MCF 10A (cell line): ENCODE measurements at regions of chr2 and their contacts with region 1.

Region 1: DNA sequence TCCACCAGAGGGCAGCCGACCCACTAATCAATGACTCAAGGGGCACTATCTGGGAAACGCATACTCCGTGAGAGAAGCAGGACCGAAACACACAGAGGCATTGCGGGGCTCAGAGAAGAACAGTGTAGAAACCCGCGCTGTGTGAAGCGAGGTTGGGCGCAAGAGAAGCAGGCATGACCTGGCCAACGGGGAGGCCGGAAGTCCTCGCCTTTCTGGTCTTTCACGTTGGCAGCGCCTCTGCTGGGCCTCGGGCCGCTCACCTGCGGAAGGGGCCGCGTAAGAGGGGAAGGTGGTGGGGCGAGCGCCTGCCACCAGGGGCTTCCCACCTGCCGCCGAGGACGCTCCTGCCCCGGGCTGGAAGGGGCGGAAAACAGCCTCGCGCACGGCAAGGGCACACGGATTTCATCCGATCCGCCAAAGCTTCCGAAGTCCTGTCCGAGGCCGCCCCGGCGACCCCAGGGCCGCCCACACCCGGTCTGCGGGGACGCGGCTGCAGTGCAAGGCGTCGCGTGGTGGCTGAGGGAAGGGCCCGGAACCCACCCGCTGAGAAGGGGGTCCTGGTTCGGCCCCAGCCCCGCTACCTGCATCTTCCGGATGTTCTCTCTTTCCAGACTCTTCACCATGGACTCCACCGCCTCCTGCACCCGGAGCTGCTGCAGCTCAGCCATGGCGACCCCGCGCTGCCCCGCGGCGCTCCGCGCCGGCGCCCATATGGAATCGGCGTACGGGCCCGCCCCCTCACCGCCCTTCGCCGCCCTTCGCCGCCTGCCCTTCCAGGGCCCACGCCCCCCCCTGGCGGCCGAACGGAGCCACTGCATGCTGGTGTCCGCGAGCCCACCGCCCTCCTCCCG is at the start of gene FAM136A:
- DNase-seq: peak; percentile 75
- H3K4me3 Mint-ChIP-seq: peak within 1 kb of the TSS; percentile 91
- H3K27ac Mint-ChIP-seq: peak within 1 kb of the TSS; percentile 85
- H3K4me1 Mint-ChIP-seq: no peaks in the 10 kb centered on the region
- H3K27me3 Mint-ChIP-seq: no peaks in the 10 kb centered on the region
- CTCF ChIP-seq: peak; percentile 97
- total RNA-seq, gene FAM136A: 38.8 and 43.8 TPM in 2 replicates

Region 2: DNA sequence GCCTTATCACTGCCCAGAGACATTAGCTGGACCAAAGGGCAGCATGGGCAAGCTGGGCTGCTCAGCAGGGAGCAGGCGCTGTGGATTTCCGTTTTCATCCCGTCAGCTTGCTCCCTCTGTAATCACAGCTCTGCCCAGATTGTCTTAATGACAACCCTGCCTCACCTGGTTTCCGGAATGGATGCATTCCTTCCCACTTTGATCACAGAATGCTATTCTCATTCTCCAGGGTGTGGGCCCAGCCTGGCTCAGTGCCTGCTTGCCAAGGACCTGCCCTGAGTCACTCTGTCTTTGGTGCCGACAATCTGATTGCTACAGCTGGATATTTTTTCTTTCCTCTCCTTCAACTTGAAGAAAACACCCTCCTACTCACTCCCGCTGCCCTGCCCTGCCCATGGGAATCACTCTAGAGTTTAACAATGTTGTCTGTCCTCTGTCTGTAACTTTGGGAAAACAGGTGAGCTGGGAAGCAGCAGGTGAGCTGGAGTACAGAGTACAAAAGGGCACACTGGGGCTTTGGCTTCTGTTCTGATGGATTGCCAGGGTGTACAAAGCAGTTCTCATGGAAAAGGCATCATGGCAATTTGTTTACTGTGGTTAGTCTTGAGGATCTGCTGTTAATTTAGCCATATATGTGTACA is 27.5 kb after region 1 on chr2:
- CTCF ChIA-PET with region 1: interaction called, 51 read pairs
- POLR2A ChIA-PET with region 1: interaction called, 13 read pairs
- intact Hi-C with region 1: no loop called
- DNase-seq: peak; percentile 92
- H3K4me3 Mint-ChIP-seq: peak overlapping the region; percentile 14
- H3K27ac Mint-ChIP-seq: peak overlapping the region; percentile 89
- H3K4me1 Mint-ChIP-seq: peaks cover 13% of the 10 kb centered on the region
- H3K27me3 Mint-ChIP-seq: no peaks in the 10 kb centered on the region
- CTCF ChIP-seq: no peak

Region 3: DNA sequence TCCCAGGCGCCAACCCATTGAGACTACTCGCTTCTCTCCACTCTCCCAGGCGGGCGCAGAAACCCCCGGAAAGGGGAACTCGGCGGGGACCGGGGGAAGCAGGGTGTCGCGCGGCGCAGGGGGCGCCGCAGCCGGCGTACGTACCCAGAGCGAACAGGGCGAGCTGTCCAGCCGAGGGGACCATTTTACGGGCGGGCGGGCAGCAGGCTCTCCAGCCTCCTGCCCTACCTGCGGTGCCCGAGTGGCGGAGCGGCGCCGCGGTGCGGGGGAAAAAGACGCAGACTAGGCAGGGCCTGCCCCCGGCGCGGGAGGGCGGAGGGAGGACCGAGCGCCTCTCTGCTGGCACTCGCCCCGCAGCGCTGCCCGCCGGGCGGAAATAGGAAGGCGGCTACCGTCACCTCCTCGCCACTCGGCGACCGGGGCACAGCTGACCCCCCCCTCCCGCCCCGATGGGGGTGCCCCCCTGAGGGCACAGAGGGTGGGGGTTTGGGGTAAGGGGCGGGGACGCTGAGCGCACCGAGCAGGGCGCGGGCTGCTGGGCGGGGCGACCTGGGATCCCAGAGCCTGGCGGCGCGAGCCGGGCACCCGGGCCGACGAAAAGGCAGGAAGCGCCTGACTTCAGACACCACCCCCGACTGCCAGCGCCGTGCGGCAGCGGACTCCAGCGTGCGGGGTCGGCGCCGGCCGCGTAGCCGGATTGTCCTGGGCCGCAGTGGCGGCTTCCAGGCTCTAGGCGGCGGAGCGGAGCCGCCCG is 252.2 kb after region 1 on chr2 and contains the start of gene TGFA:
- CTCF ChIA-PET with region 1: interaction called, 19 read pairs
- POLR2A ChIA-PET with region 1: interaction called, 6 read pairs
- intact Hi-C with region 1: loop called (anchors 1 kb)
- DNase-seq: peak; percentile 89
- H3K4me3 Mint-ChIP-seq: peak within 1 kb of the TSS; percentile 93
- H3K27ac Mint-ChIP-seq: peak within 1 kb of the TSS; percentile 83
- H3K4me1 Mint-ChIP-seq: peaks cover 15% of the 10 kb centered on the region
- H3K27me3 Mint-ChIP-seq: no peaks in the 10 kb centered on the region
- CTCF ChIP-seq: peak; percentile 84
- total RNA-seq, gene TGFA: 17.9 and 22.5 TPM in 2 replicates

Region 4: GRCh38 chr2:70641263-70641784 is 339.8 kb after region 1 on chr2:
- CTCF ChIA-PET with region 1: interaction called, 170 read pairs
- POLR2A ChIA-PET with region 1: interaction called, 4 read pairs
- intact Hi-C with region 1: loop called (anchors 1 kb)
- DNase-seq: no peak
- H3K4me3 Mint-ChIP-seq: no peak overlapping the region
- H3K27ac Mint-ChIP-seq: no peak overlapping the region
- H3K4me1 Mint-ChIP-seq: no peaks in the 10 kb centered on the region
- H3K27me3 Mint-ChIP-seq: no peaks in the 10 kb centered on the region
- CTCF ChIP-seq: no peak

Region 5: DNA sequence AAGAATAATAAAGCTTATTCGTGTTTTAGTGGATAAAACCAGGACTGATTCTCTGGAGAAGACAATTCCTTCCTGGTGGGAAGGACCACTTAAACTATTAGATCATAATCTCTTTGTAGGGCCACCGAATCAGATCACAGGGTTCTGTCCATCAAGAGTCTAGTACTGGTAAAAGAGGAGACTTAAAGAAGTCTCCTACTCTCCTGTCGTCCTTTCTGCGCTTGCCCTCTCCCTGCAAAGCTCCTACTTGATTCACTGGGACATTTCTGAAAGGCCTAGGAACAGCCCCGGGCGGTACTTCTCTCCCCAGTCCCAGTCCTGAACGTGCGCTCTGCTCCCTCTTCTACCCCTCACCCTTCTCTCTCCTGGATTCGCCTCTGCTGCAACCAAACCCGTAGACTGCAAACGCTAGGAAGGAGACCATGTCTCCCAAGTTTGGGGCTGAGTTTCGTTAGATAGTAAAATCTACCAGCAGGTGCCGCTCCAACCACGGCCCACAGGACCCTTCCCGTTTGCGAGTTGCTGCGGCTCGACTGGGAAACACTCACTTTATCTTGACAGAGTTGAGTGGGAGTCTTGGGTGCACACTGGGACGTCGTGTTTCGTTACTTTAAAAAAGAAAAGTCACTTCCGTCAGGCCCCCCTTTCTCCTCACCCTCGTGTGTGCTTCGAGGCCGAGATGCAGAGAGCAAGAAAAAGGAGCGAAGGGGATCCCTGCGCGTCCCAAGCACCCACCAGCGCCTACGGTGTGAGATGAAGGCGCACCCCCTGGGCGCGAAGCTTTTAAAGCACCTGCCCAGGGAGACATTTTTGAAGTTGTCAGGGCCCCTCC is 488.0 kb after region 1 on chr2:
- CTCF ChIA-PET with region 1: interaction called, 7 read pairs
- POLR2A ChIA-PET with region 1: interaction called, 3 read pairs
- intact Hi-C with region 1: loop called (anchors 1 kb)
- DNase-seq: peak; percentile 63
- H3K4me3 Mint-ChIP-seq: peak overlapping the region; percentile 52
- H3K27ac Mint-ChIP-seq: no peak overlapping the region
- H3K4me1 Mint-ChIP-seq: peaks cover 5% of the 10 kb centered on the region
- H3K27me3 Mint-ChIP-seq: peaks cover 56% of the 10 kb centered on the region
- CTCF ChIP-seq: peak; percentile 53

Region 6: GRCh38 chr2:70948337-70949003 is 646.9 kb after region 1 on chr2:
- CTCF ChIA-PET with region 1: interaction called, 20 read pairs
- POLR2A ChIA-PET with region 1: interaction called, 4 read pairs
- intact Hi-C with region 1: loop called (anchors 5 kb)
- DNase-seq: peak; percentile 84
- H3K4me3 Mint-ChIP-seq: peak overlapping the region; percentile 70
- H3K27ac Mint-ChIP-seq: peak overlapping the region; percentile 60
- H3K4me1 Mint-ChIP-seq: peaks cover 20% of the 10 kb centered on the region
- H3K27me3 Mint-ChIP-seq: peaks cover 7% of the 10 kb centered on the region
- CTCF ChIP-seq: peak; percentile 81